Activated CD8-positive, alpha-beta T cell treated with anti-CD3 and anti-CD28 coated beads for 36 hours (primary cell): ENCODE measurements at regions of chr14 and their contacts with region 1.

Region 1: DNA sequence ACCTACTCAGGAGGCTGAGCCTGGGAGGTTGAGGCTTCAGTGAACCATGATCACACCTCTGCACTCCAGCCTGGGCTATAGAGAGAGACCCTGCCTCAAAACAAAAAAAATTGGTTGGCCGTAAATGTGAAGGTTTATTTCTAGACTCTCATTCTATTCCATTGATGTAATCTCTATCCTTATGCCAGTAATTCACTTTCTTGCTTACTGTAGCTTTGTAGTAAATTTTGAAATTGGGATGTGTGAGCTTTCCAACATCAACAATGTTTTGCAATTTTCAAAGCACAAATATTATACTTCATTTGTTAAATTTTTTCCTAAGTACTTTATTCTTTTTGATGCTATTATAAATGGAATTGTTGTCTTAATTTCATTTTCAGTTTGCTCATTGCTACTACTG is 24.6 kb downstream of the LIN52 start:
- DNase-seq: no peak
- ATAC-seq: no peak
- H3K4me3 Mint-ChIP-seq: no peak overlapping the region
- H3K27ac Mint-ChIP-seq: no peak overlapping the region
- H3K4me1 Mint-ChIP-seq: no peaks in the 10 kb centered on the region
- H3K27me3 Mint-ChIP-seq: no peaks in the 10 kb centered on the region
- CTCF ChIP-seq: no peak

Region 2: DNA sequence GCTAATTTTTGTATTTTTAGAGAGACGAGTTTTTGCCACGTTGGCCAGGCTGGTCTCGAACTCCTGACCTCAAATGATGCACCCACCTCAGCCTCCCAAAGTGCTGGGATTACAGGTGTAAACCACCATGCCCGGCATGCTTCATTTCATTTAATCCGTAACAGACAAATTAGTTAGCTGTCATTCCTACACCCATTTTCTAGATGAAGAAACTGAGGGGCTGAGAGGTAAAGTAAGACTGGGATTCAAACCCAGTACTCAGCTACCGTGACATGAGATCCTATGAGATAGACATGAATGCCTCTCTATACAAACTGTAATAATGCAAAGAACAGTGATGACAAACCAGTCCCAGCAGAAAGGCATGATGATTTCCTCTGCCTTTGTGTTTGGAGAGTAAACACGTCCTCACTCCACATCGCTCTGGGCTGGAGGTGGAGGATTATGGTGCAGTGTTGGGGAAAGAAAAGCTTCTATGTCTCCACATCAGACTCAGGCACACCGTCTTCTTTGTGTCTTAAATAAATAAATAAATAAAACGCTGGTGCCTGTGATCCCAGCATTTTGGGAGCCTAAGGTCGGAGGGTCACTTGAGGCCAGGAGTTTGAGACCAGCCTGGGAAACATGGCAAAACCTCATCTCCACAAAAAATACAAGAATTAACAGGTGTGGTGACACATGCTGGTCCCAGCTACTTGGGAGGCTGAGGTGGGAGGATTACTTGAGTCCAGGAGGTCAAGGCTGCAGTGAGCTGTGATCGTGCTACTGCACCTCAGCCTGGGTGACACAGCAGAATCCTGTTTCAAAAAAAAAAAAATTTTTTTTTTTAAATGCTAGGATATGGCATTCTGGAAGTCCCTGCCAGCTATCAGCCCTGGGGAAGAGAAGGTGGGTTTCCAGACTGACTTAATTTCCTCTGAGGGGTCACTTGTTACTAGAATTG is 140.3 kb after region 1 on chr14:
- CTCF ChIA-PET with region 1: interaction called, 11 read pairs
- POLR2A ChIA-PET with region 1: no interaction called
- intact Hi-C with region 1: loop called (anchors 5 kb)
- DNase-seq: no peak
- ATAC-seq: no peak
- H3K4me3 Mint-ChIP-seq: no peak overlapping the region
- H3K27ac Mint-ChIP-seq: no peak overlapping the region
- H3K4me1 Mint-ChIP-seq: peaks cover 6% of the 10 kb centered on the region
- H3K27me3 Mint-ChIP-seq: peaks cover 28% of the 10 kb centered on the region
- CTCF ChIP-seq: no peak